Activated CD8-positive, alpha-beta T cell treated with anti-CD3 and anti-CD28 coated beads for 36 hours (primary cell): ENCODE measurements at regions of chr6 and their contacts with region 1.

Region 1: GRCh38 chr6:149431905-149432775 is 32.1 kb downstream of the SUMO4 start:
- DNase-seq: peak; percentile 96
- ATAC-seq: peak; percentile 97
- H3K4me3 Mint-ChIP-seq: peak overlapping the region; percentile 28
- H3K27ac Mint-ChIP-seq: peak overlapping the region; percentile 77
- H3K4me1 Mint-ChIP-seq: peaks cover 6% of the 10 kb centered on the region
- H3K27me3 Mint-ChIP-seq: no peaks in the 10 kb centered on the region
- CTCF ChIP-seq: peak; percentile 95

Region 2: GRCh38 chr6:149037051-149037671 is 395.0 kb before region 1 on chr6:
- CTCF ChIA-PET with region 1: interaction called, 180 read pairs
- POLR2A ChIA-PET with region 1: interaction called, 3 read pairs
- intact Hi-C with region 1: no loop called
- DNase-seq: no peak
- ATAC-seq: no peak
- H3K4me3 Mint-ChIP-seq: no peak overlapping the region
- H3K27ac Mint-ChIP-seq: no peak overlapping the region
- H3K4me1 Mint-ChIP-seq: peaks cover 47% of the 10 kb centered on the region
- H3K27me3 Mint-ChIP-seq: no peaks in the 10 kb centered on the region
- CTCF ChIP-seq: no peak

Region 3: DNA sequence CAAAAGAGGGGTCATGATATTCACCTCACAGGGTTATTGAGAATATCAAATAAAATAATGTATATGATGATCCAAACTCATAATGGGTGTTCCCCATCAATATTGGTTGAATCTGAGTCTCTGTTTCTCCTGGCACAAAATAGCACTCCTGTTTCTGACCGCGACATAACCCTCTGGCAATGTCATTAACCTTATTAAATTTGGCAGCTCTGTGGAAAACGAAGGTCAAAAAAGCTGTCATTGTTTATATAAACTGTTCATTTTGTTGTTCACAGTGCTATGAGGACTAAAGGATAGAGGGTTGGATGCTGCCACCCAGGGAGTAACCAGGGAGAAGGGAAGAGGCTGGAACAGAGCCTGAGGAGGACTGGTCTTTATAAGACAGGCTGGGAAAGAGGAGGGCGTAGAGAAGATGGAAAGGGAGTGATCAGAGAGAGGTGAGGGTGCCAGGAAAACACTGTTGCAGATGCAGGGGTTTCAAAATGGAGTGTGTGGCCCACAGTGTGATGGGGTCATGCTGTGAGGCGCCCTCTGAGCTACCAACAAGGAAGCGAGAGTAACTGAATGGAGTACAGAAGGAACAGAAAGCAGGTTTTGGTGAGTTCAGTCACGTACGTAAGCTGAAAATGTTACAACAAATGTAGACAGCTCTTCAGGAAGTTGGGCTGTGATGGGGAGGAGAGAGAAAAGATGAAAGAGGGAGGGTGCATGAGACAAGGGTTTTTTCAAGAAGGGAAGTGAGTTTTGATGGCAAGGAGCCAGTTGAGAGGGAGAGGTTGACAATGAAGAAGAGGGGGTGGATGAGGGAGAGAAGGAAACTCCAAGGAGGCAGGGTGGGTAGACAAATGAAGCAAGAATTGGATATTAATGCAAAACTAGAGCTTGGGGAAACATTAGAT is 366.2 kb before region 1 on chr6:
- CTCF ChIA-PET with region 1: interaction called, 17 read pairs
- POLR2A ChIA-PET with region 1: no interaction called
- intact Hi-C with region 1: no loop called
- DNase-seq: peak; percentile 69
- ATAC-seq: peak; percentile 97
- H3K4me3 Mint-ChIP-seq: peak overlapping the region; percentile 3
- H3K27ac Mint-ChIP-seq: peak overlapping the region; percentile 85
- H3K4me1 Mint-ChIP-seq: peaks cover 32% of the 10 kb centered on the region
- H3K27me3 Mint-ChIP-seq: no peaks in the 10 kb centered on the region
- CTCF ChIP-seq: no peak

Region 4: DNA sequence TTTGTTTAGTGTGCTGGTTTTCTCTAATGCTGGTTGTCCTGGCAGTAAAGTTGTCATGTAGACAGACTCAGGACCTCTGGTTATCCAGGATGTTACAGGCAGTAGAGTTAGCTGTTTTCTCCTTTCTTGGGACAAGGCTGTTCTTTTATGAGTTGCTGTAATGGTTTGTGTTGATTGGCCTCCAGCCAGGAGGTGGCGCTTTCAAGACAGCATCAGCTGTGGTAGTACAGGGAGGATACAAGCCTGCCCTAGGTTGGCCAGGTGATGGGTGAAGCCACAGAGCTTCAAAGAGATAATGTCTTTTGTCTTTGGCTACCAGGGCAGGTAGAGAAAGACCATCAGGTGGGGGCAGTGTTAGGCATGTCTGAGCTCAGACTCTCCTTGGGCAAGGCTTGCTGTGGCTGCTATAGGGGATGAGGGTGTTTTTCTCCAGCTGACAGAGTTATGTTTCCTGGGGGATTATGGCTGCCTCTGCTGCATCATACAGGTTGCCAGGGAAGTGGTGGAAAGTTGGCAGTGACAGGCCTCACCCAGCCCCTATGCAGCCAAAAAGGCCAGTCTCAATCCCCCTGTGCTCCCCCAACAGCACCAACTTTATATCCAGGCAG is 241.8 kb before region 1 on chr6:
- CTCF ChIA-PET with region 1: interaction called, 18 read pairs
- POLR2A ChIA-PET with region 1: no interaction called
- intact Hi-C with region 1: no loop called
- DNase-seq: peak; percentile 79
- ATAC-seq: peak; percentile 84
- H3K4me3 Mint-ChIP-seq: no peak overlapping the region
- H3K27ac Mint-ChIP-seq: peak overlapping the region; percentile 57
- H3K4me1 Mint-ChIP-seq: peaks cover 20% of the 10 kb centered on the region
- H3K27me3 Mint-ChIP-seq: no peaks in the 10 kb centered on the region
- CTCF ChIP-seq: peak; percentile 33

Region 5: DNA sequence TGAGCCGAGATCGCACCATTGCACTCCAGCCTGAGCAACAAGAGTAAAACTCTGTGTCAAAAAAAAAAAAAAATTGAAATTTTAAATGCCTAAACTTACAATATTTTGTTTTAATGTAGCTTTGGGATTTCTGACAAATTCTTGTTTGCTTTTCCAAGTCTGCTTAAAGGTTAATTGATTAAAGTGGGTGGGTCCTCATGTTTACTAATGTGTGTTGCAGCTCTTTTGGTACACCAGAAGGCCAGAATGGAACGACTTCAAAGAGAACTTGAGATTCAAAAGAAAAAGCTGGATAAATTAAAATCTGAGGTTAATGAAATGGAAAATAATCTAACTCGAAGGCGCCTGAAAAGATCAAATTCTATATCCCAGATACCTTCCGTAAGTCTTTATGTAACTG is 34.8 kb before region 1 on chr6:
- CTCF ChIA-PET with region 1: interaction called, 10 read pairs
- POLR2A ChIA-PET with region 1: no interaction called
- intact Hi-C with region 1: no loop called
- DNase-seq: no peak
- ATAC-seq: no peak
- H3K4me3 Mint-ChIP-seq: no peak overlapping the region
- H3K27ac Mint-ChIP-seq: no peak overlapping the region
- H3K4me1 Mint-ChIP-seq: peaks cover 34% of the 10 kb centered on the region
- H3K27me3 Mint-ChIP-seq: no peaks in the 10 kb centered on the region
- CTCF ChIP-seq: no peak

Region 6: GRCh38 chr6:149508485-149508884 is 76.3 kb after region 1 on chr6:
- CTCF ChIA-PET with region 1: interaction called, 12 read pairs
- POLR2A ChIA-PET with region 1: interaction called, 3 read pairs
- intact Hi-C with region 1: no loop called
- DNase-seq: peak; percentile 53
- ATAC-seq: peak; percentile 83
- H3K4me3 Mint-ChIP-seq: peak overlapping the region; percentile 42
- H3K27ac Mint-ChIP-seq: peak overlapping the region; percentile 99
- H3K4me1 Mint-ChIP-seq: peaks cover 52% of the 10 kb centered on the region
- H3K27me3 Mint-ChIP-seq: no peaks in the 10 kb centered on the region
- CTCF ChIP-seq: no peak

Region 7: GRCh38 chr6:149614337-149614736 is 182.2 kb after region 1 on chr6:
- CTCF ChIA-PET with region 1: no interaction called
- POLR2A ChIA-PET with region 1: no interaction called
- intact Hi-C with region 1: no loop called
- DNase-seq: no peak
- ATAC-seq: no peak
- H3K4me3 Mint-ChIP-seq: no peak overlapping the region
- H3K27ac Mint-ChIP-seq: no peak overlapping the region
- H3K4me1 Mint-ChIP-seq: peaks cover 7% of the 10 kb centered on the region
- H3K27me3 Mint-ChIP-seq: no peaks in the 10 kb centered on the region
- CTCF ChIP-seq: no peak

Region 8: DNA sequence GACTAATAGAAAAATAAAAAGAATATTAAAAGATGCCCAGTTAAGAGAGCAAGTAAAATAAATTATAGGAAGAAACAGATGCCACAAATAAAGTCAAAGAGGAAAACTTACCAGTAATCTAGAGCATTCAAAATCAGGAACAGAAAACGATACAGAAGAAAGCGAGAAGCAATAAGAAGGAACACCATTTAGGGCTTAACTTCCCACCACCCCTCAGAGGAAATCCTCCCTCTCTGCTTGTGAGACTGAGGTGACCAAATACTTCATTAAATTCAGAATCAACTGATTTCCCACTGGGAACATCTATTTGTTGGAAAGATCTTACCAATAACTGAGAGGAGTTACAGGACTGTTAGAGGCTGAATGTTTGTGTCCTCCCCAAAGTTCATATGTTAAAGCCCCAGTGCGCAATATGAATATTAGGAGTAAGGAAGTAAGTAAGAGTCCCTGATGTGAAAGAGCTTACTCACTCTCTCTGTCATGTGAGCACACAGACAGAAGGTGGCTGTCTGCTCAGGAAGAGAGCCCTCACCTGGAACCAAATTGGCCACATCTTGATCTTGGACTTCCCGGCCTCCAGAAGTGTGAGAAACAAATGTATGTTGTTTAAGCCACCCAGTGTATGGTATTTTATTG is 196.9 kb after region 1 on chr6:
- CTCF ChIA-PET with region 1: no interaction called
- POLR2A ChIA-PET with region 1: no interaction called
- intact Hi-C with region 1: no loop called
- DNase-seq: no peak
- ATAC-seq: peak; percentile 61
- H3K4me3 Mint-ChIP-seq: no peak overlapping the region
- H3K27ac Mint-ChIP-seq: peak overlapping the region; percentile 70
- H3K4me1 Mint-ChIP-seq: peaks cover 11% of the 10 kb centered on the region
- H3K27me3 Mint-ChIP-seq: no peaks in the 10 kb centered on the region
- CTCF ChIP-seq: no peak

Region 9: DNA sequence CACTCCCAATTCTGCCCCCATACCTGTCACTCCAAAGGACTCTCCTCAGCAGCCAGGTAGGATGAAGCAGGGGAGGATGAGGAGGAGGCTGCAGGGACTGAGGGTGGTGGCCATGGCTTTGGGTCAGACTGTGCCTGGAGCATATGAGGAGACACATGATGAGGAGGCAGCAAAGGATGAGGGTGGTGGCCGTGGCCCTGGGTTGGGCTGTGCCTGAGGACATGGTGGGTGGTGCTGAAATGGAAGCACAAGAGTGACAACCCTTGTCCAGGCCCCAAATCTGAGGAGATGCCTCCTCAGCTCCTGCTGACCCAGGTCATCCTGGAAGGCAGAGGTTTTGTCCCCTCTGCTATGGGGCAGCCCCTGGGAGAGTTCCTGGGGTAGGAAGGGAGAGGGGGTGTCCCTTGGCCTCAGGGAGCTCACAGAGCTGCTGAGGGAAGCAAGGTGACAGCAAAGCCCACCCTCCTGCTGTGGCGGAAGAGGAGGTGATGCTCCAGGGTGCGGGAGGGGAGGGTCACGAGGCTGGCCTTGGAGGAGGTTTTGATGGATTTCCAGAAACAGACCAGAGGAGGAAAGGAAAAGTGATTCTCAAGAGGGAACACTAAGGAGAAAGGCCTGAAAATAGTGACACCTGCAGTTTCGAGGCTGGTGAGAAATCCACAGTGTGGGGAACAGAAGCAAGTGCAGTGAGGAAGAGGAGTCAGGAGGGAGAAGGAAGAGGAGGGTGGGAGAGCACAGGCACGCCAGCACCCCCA is 486.2 kb after region 1 on chr6:
- CTCF ChIA-PET with region 1: no interaction called
- POLR2A ChIA-PET with region 1: no interaction called
- intact Hi-C with region 1: no loop called
- DNase-seq: no peak
- ATAC-seq: no peak
- H3K4me3 Mint-ChIP-seq: no peak overlapping the region
- H3K27ac Mint-ChIP-seq: no peak overlapping the region
- H3K4me1 Mint-ChIP-seq: peaks cover 8% of the 10 kb centered on the region
- H3K27me3 Mint-ChIP-seq: peaks cover 33% of the 10 kb centered on the region
- CTCF ChIP-seq: no peak